GM12878 (cell line): ENCODE measurements at regions of chr6 and their contacts with region 1.

Region 1: DNA sequence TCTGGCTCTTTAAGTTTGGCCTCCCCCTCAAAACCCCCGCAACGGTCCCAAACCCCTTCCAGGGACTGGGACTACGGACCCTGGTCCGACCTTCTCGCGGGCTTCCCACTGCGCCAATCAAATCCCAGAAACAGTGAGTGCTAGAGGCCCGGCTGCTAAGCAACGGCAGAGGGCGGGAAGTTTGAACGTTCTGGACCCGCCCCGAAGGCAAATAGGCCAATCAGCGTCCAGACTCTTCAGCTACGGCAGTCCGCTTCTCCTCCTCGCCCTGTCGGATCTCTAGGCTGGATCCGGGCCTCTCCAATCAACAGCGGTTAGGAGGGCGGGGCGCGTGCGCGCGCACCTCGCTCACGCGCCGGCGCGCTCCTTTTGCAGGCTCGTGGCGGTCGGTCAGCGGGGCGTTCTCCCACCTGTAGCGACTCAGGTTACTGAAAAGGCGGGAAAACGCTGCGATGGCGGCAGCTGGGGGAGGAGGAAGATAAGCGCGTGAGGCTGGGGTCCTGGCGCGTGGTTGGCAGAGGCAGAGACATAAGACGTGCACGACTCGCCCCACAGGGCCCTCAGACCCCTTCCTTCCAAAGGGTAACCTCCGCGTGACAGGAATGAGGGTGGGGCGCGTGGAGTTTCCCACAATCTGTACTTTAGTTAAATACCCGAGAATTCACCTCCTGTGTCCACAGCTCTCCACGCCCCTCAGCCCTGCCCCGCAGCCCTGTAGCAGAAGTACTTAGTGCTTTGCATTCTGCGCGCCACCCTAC is at the start of gene MSH5:
- DNase-seq: peak; percentile 98
- ATAC-seq: peak; percentile 81
- H3K4me3 ChIP-seq: peak within 1 kb of the TSS; percentile 100
- H3K27ac ChIP-seq: peak within 1 kb of the TSS; percentile 99
- H3K4me1 ChIP-seq: peaks cover 19% of the 10 kb centered on the region
- H3K27me3 ChIP-seq: no peaks in the 10 kb centered on the region
- CTCF ChIP-seq: no peak
- EP300 ChIP-seq: no peak; a peak in 1 of 4 replicates
- POLR2A ChIP-seq: peak; percentile 78
- RAD21 ChIP-seq: no peak
- polyA plus RNA-seq, gene MSH5: 9.1 to 10.1 TPM

Region 2: DNA sequence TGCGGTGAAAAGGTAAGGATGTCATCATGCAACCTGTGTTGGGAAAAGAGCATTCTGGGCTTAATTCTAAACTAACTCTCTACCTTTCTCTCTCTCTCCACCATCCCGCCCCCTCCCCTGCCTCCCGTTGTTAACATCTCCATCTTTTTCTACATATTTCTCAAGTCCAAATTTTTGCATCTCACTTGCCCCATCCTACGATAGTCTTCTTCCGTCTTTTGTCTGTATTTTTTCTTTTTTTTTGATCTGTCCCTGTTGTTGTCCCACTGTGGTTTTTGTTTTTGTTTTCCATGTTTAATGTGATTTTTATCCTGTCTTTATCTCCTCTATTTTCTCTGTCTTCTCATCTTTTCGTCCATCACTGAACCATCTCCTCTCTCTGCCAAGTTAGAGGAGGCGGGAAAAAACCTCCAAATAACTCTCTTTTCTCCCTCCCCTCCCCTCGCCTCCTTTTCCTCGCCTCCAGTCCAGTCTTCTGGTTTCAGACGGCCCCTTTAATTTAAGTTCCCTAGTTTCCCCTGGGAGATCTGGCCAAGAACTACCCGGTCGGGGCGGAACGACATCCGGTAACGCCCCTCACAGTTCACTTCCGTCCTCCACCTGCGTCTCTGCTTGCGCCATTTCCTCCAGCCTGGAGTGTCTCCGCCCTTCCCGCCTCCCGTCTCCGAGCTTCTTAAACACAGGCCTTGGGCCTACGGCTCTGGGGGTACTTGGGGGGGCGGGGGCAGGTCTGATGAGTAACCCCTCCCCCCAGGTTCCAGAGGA is 192.7 kb before region 1 on chr6 and contains the start of gene NFKBIL1:
- CTCF ChIA-PET with region 1: interaction called, 11 read pairs
- POLR2A ChIA-PET with region 1: interaction called, 4 read pairs
- RAD21 ChIA-PET with region 1: interaction called, 3 read pairs
- SMC1A ChIA-PET with region 1: interaction called, 7 read pairs
- in situ Hi-C with region 1: no loop called
- intact Hi-C with region 1: loop called (anchors 2 kb)
- DNase-seq: peak; percentile 89
- ATAC-seq: peak; percentile 88
- H3K4me3 ChIP-seq: peak within 1 kb of the TSS; percentile 72
- H3K27ac ChIP-seq: peak within 1 kb of the TSS; percentile 64
- H3K4me1 ChIP-seq: peaks cover 23% of the 10 kb centered on the region; the same call in 1 of the 2 replicates
- H3K27me3 ChIP-seq: no peaks in the 10 kb centered on the region
- CTCF ChIP-seq: no peak
- EP300 ChIP-seq: 0 out of 4 replicates have a peak, but pooled peaks of 1 of the 2 experiments have one; percentile 20
- POLR2A ChIP-seq: peak; percentile 69
- RAD21 ChIP-seq: no peak
- polyA plus RNA-seq, gene NFKBIL1: 0.19 to 0.64 TPM

Region 3: GRCh38 chr6:31680840-31681671 is 58.8 kb before region 1 on chr6 and contains the start of gene LY6G5C:
- CTCF ChIA-PET with region 1: interaction called, 16 read pairs
- POLR2A ChIA-PET with region 1: interaction called, 4 read pairs
- RAD21 ChIA-PET with region 1: no interaction called
- SMC1A ChIA-PET with region 1: interaction called, 6 read pairs
- in situ Hi-C with region 1: no loop called
- intact Hi-C with region 1: no loop called
- DNase-seq: no peak
- ATAC-seq: peak; percentile 83
- H3K4me3 ChIP-seq: peak within 1 kb of the TSS; percentile 71
- H3K27ac ChIP-seq: peak within 1 kb of the TSS; percentile 15; the same call in 1 of the 2 replicates
- H3K4me1 ChIP-seq: peaks cover 6% of the 10 kb centered on the region
- H3K27me3 ChIP-seq: no peaks in the 10 kb centered on the region
- CTCF ChIP-seq: peak; percentile 74 to 91 (median 75)
- EP300 ChIP-seq: no peak
- POLR2A ChIP-seq: no peak
- RAD21 ChIP-seq: peak; percentile 93
- polyA plus RNA-seq, gene LY6G5C: 0.87 to 1.2 TPM

Region 4: GRCh38 chr6:31729515-31729978 is 10.3 kb before region 1 on chr6:
- CTCF ChIA-PET with region 1: interaction called, 34 read pairs
- POLR2A ChIA-PET with region 1: interaction called, 30 read pairs
- RAD21 ChIA-PET with region 1: interaction called, 33 read pairs
- SMC1A ChIA-PET with region 1: interaction called, 45 read pairs
- in situ Hi-C with region 1: no loop called
- intact Hi-C with region 1: no loop called
- DNase-seq: peak; percentile 35
- ATAC-seq: peak; percentile 84
- H3K4me3 ChIP-seq: peak overlapping the region; percentile 78
- H3K27ac ChIP-seq: peak overlapping the region; percentile 13; the same call in 1 of the 2 replicates
- H3K4me1 ChIP-seq: peaks cover 33% of the 10 kb centered on the region
- H3K27me3 ChIP-seq: no peaks in the 10 kb centered on the region
- CTCF ChIP-seq: peak in 2 of 3 experiments; percentile 84 to 94; a peak in 3 of 6 replicates
- EP300 ChIP-seq: no peak
- POLR2A ChIP-seq: no peak
- RAD21 ChIP-seq: peak; percentile 90

Region 5: DNA sequence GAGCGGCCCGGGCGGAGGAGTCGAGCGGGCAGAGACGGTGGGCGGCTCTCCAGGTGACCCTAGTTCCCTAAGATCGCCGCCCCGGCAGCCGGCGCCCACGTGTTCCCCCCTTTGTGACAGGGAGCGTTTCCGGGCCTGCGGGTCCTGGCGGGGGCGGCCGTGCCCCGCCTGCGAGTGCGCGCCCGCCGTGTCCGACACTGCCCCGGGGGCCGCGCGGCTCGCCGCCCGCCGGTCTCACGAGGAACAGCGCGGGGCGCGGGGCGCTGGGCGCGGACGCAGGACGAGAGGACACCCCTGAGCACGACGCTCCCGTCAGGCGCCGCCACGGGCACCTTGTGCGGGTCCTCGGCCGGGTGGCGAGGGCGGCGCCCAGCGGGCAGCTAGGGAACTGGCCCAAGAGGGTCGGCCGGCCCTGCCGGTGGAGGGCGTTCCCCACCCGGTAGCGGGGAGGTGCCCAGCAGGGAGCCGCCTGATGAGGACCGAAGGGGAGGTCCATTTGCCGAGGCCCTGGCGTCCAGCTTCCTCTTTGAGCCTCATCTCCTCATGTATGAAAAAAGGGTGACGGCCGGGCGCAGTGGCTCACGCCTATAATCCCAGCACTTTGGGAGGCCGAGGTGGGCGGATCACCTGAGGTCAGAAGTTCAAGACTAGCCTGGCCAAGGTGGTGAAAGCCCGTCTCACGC is 55.9 kb after region 1 on chr6 and contains the start of gene VARS1:
- CTCF ChIA-PET with region 1: interaction called, 41 read pairs
- POLR2A ChIA-PET with region 1: interaction called, 32 read pairs
- RAD21 ChIA-PET with region 1: interaction called, 22 read pairs
- SMC1A ChIA-PET with region 1: interaction called, 11 read pairs
- in situ Hi-C with region 1: no loop called
- intact Hi-C with region 1: no loop called
- DNase-seq: peak; percentile 62
- ATAC-seq: peak; percentile 88
- H3K4me3 ChIP-seq: peak within 1 kb of the TSS; percentile 81
- H3K27ac ChIP-seq: peak within 1 kb of the TSS; percentile 95
- H3K4me1 ChIP-seq: peaks cover 4% of the 10 kb centered on the region
- H3K27me3 ChIP-seq: no peaks in the 10 kb centered on the region
- CTCF ChIP-seq: peak; percentile 84 to 98 (median 88); a peak in 5 of 6 replicates
- EP300 ChIP-seq: no peak
- POLR2A ChIP-seq: peak; percentile 76
- RAD21 ChIP-seq: peak; percentile 53
- polyA plus RNA-seq, gene VARS1: 1.2 to 5.7 TPM

Region 6: GRCh38 chr6:31815025-31815838 is 75.4 kb after region 1 on chr6 and contains the starts of genes HSPA1A and HSPA1L:
- CTCF ChIA-PET with region 1: interaction called, 3 read pairs
- POLR2A ChIA-PET with region 1: interaction called, 158 read pairs
- RAD21 ChIA-PET with region 1: interaction called, 27 read pairs
- SMC1A ChIA-PET with region 1: interaction called, 7 read pairs
- in situ Hi-C with region 1: no loop called
- intact Hi-C with region 1: no loop called
- DNase-seq: no peak
- ATAC-seq: peak; percentile 58
- H3K4me3 ChIP-seq: peak within 1 kb of the TSS; percentile 94
- H3K27ac ChIP-seq: peak within 1 kb of the TSS; percentile 58
- H3K4me1 ChIP-seq: peaks cover 29% of the 10 kb centered on the region
- H3K27me3 ChIP-seq: no peaks in the 10 kb centered on the region
- CTCF ChIP-seq: no peak
- EP300 ChIP-seq: 0 out of 4 replicates have a peak, but pooled peaks of 1 of the 2 experiments have one; percentile 30
- POLR2A ChIP-seq: peak; percentile 81
- RAD21 ChIP-seq: no peak
- polyA plus RNA-seq, gene HSPA1A: 0.29 to 1.3 TPM
- polyA plus RNA-seq, gene HSPA1L: 0.69 TPM